Endothelial cell of umbilical vein (primary cell): ENCODE measurements at regions of chr16 and their contacts with region 1.

Region 1: DNA sequence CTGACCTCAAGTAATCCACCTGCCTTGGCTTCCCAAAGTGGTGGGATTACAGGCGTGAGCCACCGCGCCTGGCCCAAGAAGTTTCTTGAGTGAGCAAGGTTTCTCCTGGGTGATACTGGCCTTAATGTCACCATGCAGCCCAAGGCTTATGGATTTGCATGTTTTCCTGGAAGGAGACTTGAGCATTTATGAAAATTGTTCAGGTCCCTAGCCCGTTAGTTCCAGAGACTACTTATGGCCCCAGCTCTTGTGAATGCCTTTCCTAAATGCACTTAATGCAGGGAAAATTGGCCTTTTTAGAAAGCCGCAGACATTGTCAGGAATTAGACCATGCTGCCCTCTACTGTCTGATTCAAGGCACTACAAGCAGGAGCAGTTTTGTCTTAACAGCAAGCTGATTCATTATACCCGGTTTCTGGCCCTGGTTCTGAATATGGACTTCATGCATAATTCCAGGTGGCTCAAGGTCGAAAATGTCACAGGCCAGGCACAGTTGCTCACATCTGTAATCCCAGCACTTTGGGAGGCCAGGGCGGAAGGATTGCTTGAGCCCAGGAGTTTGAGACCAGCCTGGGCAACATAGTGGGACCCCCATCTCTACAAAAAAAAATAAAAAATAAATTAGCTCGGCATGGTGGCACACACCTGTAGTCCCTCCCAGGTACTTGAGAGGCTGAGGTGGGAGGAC is 91.3 kb downstream of the SNX29 start:
- DNase-seq: peak; percentile 80
- H3K4me3 ChIP-seq: no peak overlapping the region
- H3K27ac ChIP-seq: no peak overlapping the region
- H3K4me1 ChIP-seq: peaks cover under 1% of the 10 kb centered on the region
- H3K27me3 ChIP-seq: no peaks in the 10 kb centered on the region
- CTCF ChIP-seq: peak; percentile 82 to 84
- POLR2A ChIP-seq: no peak

Region 2: DNA sequence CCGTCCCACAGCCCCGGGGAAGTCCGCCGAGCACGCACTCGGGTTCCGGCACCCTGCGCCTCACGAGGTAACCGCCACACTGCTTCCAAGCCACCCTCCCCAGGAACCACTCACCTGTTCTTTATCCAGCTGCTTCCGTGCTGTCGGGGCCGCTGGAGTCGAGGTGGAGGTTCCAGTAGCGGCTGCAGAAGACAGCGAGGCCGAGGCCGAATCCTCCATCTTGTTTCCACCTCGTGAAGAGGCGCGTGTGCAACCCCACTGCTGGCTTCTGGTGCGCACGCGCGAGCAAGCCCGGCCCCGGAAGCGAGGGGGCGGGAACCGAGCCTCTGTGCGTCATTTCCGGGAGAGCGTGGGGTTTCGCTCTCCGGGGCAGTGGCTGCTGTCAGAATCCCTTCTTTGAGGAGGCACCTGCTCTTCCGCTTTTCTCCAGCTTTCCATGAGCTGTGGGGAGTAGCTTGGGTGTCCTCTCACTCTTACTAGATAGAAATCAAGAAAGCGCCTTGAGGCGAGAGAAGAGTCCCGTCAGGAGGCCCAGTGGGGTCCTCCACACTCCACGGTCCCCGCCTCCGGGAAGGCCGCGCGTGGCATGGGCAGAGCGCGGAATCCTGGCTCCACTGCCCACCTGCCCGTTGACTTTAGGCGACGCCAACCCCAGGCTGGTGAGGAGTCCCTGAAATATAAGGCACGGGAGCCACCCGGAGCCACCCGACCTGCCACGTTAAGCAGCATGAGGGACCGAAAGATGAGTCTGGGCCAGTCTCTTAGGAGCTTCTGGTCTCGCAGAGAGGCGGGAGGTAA is 216.4 kb before region 1 on chr16 and contains the start of gene RSL1D1:
- CTCF ChIA-PET with region 1: interaction called, 15 read pairs
- POLR2A ChIA-PET with region 1: no interaction called
- dilution Hi-C with region 1: no loop called
- intact Hi-C with region 1: loop called (anchors 5 kb)
- DNase-seq: peak; percentile 98
- H3K4me3 ChIP-seq: peak within 1 kb of the TSS; percentile 51 to 95 (median 72)
- H3K27ac ChIP-seq: peak within 1 kb of the TSS; percentile 47
- H3K4me1 ChIP-seq: peaks cover 11% of the 10 kb centered on the region
- H3K27me3 ChIP-seq: no peaks in the 10 kb centered on the region
- CTCF ChIP-seq: no peak
- POLR2A ChIP-seq: peak; percentile 98
- total RNA-seq, gene RSL1D1: 127 and 132 TPM in 2 replicates

Region 3: DNA sequence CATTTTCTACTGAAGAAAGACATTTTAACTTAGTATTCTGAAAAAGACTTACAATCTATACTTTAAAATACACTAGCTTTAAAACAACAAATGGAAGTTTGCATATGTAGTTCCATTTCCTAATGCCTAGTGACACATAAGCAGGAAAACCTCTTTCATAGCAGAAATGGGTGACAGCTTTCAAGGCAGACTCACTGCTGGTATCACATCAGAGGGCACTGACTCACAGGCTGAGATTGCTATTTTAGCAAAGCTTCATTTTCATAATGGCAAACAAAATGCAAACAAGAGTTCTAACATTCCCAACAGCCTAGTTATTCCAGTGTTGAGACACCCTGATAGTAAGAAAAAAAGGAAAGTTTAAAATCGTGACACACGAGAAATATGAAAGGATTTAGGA is 171.1 kb before region 1 on chr16:
- CTCF ChIA-PET with region 1: interaction called, 34 read pairs
- POLR2A ChIA-PET with region 1: no interaction called
- dilution Hi-C with region 1: no loop called
- intact Hi-C with region 1: loop called (anchors 5 kb)
- DNase-seq: peak; percentile 70
- H3K4me3 ChIP-seq: no peak overlapping the region
- H3K27ac ChIP-seq: peak overlapping the region; percentile 50
- H3K4me1 ChIP-seq: peaks cover 19% of the 10 kb centered on the region
- H3K27me3 ChIP-seq: no peaks in the 10 kb centered on the region
- CTCF ChIP-seq: no peak
- POLR2A ChIP-seq: no peak

Region 4: DNA sequence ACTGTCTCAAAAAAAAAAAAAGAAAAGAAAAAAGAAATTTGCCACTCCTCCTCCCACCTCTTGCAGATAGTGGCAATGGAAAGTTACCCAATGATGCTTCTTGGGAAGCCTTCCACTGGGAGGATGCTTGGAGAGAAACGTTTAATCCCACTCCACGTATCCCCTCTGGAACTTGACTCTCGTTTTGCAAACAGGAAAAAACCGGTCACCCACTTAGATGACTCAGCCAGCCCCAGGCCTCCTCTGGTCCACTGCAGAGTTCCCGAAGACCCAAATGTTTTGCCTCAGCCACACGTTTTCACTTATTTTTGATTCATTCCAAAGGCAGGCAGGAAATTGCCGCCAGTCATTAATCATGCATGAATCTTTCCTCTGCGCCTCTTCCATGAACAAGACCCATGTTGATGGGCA is 112.1 kb before region 1 on chr16:
- CTCF ChIA-PET with region 1: interaction called, 22 read pairs
- POLR2A ChIA-PET with region 1: no interaction called
- dilution Hi-C with region 1: no loop called
- intact Hi-C with region 1: no loop called
- DNase-seq: no peak
- H3K4me3 ChIP-seq: no peak overlapping the region
- H3K27ac ChIP-seq: no peak overlapping the region
- H3K4me1 ChIP-seq: no peaks in the 10 kb centered on the region
- H3K27me3 ChIP-seq: no peaks in the 10 kb centered on the region
- CTCF ChIP-seq: no peak
- POLR2A ChIP-seq: no peak

Region 5: DNA sequence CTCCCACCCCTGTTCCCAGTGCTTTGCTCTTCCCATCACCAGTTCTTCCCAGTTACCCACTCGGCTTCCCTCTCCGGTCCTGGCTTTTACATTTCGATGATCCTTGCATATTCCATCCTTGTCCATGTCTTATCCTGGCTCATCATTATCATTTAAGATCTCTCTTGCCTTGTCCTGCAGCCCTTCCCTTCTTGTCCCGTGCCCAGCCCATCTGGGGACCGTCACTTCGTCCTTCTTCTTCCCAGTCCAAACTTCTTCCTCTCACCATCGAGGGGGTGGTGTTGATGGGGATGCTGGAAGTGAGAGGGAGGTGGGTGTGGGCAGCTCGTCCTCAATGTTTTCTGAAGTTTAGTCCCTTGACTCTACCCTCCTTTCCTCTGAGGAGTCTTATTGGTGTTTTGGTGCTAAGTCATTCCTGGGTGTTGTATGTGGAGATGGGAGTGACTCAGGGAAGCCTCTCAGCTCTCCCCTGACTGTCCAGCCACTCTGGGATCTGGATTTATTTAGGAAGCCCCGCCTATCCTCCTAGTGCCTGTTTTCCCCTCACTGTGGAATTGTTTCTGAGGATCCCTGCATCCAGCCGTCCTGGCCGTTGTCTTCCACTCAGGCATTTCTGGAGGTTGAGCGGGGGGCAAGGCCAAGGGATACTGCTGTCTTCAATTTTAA is 90.3 kb before region 1 on chr16:
- CTCF ChIA-PET with region 1: interaction called, 37 read pairs
- POLR2A ChIA-PET with region 1: no interaction called
- dilution Hi-C with region 1: no loop called
- intact Hi-C with region 1: loop called (anchors 1 kb)
- DNase-seq: peak; percentile 12
- H3K4me3 ChIP-seq: peak overlapping the region; percentile 72 to 97 (median 74)
- H3K27ac ChIP-seq: no peak overlapping the region
- H3K4me1 ChIP-seq: peaks cover 14% of the 10 kb centered on the region
- H3K27me3 ChIP-seq: no peaks in the 10 kb centered on the region
- CTCF ChIP-seq: no peak
- POLR2A ChIP-seq: no peak

Region 6: DNA sequence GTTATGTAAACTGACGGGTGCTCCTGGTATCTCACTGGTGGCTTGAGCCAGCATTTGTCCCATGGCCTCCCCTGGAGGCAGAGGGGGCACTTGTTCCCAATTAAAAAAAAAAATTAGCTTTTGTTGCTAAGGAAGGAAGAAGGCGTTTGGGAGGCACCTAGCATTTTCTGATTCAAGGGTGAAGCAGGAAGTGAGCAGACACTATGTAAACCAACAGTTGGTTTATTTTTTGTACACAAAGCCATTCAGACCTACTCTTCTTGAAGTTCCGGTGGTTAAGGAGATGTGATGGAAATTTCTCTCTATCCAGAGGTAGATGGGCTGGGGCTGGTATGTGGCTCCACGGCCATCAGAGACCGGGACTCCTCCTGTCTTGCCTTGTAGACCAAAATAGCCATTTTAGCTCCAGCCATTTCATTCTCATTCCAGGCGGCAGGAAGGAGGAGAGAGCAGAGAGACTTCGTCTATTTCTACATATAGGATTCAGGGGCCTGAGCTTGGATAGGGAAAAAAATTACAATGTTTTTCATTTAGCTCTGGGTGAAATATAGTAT is 11.6 kb after region 1 on chr16:
- CTCF ChIA-PET with region 1: interaction called, 28 read pairs
- POLR2A ChIA-PET with region 1: no interaction called
- dilution Hi-C with region 1: no loop called
- intact Hi-C with region 1: no loop called
- DNase-seq: no peak
- H3K4me3 ChIP-seq: no peak overlapping the region
- H3K27ac ChIP-seq: no peak overlapping the region
- H3K4me1 ChIP-seq: peaks cover 8% of the 10 kb centered on the region
- H3K27me3 ChIP-seq: no peaks in the 10 kb centered on the region
- CTCF ChIP-seq: no peak
- POLR2A ChIP-seq: no peak